Activated CD4-positive, alpha-beta T cell treated with anti-CD3 and anti-CD28 coated beads, Interleukin-2, amount 10 ng/mL, durations not matched to agents 24 days and 14 days (primary cell): ENCODE measurements at regions of chr12 and their contacts with region 1.

Region 1: GRCh38 chr12:39628836-39629235 is 9.2 kb upstream of the ABCD2 start:
- DNase-seq: peak; percentile 77
- H3K4me3 Mint-ChIP-seq: peak overlapping the region; percentile 64
- H3K27ac Mint-ChIP-seq: peak overlapping the region; percentile 90
- H3K4me1 Mint-ChIP-seq: peaks cover 39% of the 10 kb centered on the region
- H3K27me3 Mint-ChIP-seq: no peaks in the 10 kb centered on the region

Region 2: GRCh38 chr12:39643052-39643451 is 14.2 kb after region 1 on chr12:
- intact Hi-C with region 1: loop called (anchors 2 kb)
- DNase-seq: no peak
- H3K4me3 Mint-ChIP-seq: no peak overlapping the region
- H3K27ac Mint-ChIP-seq: no peak overlapping the region
- H3K4me1 Mint-ChIP-seq: peaks cover 13% of the 10 kb centered on the region
- H3K27me3 Mint-ChIP-seq: no peaks in the 10 kb centered on the region

Region 3: DNA sequence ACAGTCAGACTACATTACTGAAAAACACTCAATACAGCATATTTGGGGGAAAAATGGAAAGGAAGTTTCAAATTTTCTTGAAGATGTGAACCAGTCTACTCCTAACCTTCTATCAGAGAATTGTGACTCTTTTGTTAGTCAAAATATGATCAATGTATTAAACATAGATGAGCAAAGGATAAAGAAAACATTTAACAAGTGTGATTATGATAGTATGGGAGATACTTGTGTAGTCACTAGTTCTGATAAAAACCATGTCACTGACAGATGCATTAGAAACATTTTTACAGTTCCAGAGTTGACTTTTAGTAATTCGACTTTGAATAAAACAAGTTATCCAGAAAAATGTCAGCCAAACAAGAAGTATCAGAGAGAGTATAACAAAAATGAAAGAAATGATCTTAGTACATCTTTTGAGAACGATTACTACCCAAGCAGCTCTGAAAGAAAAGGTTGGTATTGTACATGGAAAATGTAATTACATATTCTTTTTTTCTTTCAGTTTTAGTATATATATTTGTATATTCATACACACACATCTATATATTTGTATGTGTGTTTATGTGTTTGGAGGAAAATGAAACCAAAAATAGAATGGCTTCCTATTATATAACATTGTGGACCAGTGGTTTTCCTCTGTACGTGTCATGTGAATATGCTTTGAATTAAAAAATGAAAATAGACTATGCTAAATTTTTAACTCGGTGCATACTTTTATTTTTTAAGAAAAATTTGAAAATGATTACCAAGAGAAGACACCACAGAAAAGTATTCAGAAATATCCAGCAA is 54.0 kb after region 1 on chr12:
- intact Hi-C with region 1: loop called (anchors 2 kb)
- DNase-seq: no peak
- H3K4me3 Mint-ChIP-seq: peak overlapping the region; percentile 78
- H3K27ac Mint-ChIP-seq: peak overlapping the region; percentile 78
- H3K4me1 Mint-ChIP-seq: peaks cover 40% of the 10 kb centered on the region
- H3K27me3 Mint-ChIP-seq: no peaks in the 10 kb centered on the region

Region 4: DNA sequence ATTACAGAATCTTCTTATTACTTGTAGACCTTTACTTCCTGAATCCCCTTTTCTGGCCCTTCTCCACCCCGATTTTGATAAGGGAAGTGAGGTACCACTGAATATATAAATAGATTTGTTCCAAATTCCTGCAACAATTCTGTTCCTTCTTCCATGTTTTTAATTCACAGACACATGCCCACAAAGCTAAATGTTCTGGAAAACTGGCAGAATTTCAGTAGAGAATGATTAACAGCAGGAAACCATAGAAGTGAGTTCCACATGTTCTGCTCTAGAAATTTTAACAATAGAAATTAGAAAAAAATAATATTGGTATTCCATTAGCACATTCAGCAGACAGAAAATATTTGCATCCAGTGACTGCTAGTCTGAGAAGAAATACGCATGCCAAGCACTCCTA is 337.4 kb after region 1 on chr12:
- intact Hi-C with region 1: no loop called
- DNase-seq: no peak
- H3K4me3 Mint-ChIP-seq: no peak overlapping the region
- H3K27ac Mint-ChIP-seq: no peak overlapping the region
- H3K4me1 Mint-ChIP-seq: no peaks in the 10 kb centered on the region
- H3K27me3 Mint-ChIP-seq: no peaks in the 10 kb centered on the region